Dorsolateral prefrontal cortex (tissue), 120 donors: ENCODE measurements at regions of chr1 and their contacts with region 1.

Region 1: DNA sequence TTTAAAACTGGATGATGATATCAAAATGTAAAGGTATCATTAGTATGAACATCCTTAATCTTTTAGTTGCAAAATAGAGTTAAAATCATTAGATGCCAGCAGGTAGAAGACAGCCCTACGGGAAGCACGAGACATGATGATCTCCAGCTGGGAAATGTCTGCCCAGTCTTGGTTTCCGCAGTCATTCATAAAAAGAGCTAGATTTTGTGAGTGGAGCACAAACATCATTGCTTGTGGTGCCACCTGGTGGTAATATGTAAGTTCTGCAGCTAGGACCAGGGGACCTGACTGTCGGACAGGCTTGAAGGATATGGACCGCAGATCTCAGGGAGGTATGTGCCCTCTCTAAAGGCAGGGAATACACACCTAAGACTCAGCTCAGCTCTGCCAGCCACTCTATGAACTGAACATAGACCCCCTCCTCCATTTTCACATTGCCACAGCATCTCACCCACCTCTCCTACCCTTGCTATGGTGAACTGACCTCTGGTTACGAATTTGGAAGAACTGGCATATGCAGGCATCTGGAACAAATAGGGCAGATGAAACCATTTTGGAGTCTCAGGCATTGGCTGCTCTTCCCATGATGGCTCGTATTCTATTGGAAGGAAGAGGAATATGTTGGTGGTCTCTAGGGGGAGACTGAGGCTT is 9.2 kb downstream of the FCMR start:
- DNase-seq: peak; percentile 40 to 83 (median 70)
- H3K4me3 ChIP-seq: no peak overlapping the region
- H3K27ac ChIP-seq: no peak overlapping the region
- H3K27me3 ChIP-seq: peaks cover 0 to 40% (median 22%) of the 10 kb centered on the region in 45 donors
- CTCF ChIP-seq: peak; percentile 70 to 98 (median 93)

Region 2: GRCh38 chr1:206725109-206725963 is 187.2 kb before region 1 on chr1:
- intact Hi-C with region 1: loop called in 1 of 2 experiments (anchors 2 kb)
- DNase-seq: peak in 4 of 10 donors; percentile 26 to 52 (median 36)
- H3K4me3 ChIP-seq: no peak overlapping the region
- H3K27ac ChIP-seq: no peak overlapping the region
- H3K27me3 ChIP-seq: no peaks in the 10 kb centered on the region
- CTCF ChIP-seq: peak in 53 of 56 donors; percentile 11 to 68 (median 51)

Region 3: DNA sequence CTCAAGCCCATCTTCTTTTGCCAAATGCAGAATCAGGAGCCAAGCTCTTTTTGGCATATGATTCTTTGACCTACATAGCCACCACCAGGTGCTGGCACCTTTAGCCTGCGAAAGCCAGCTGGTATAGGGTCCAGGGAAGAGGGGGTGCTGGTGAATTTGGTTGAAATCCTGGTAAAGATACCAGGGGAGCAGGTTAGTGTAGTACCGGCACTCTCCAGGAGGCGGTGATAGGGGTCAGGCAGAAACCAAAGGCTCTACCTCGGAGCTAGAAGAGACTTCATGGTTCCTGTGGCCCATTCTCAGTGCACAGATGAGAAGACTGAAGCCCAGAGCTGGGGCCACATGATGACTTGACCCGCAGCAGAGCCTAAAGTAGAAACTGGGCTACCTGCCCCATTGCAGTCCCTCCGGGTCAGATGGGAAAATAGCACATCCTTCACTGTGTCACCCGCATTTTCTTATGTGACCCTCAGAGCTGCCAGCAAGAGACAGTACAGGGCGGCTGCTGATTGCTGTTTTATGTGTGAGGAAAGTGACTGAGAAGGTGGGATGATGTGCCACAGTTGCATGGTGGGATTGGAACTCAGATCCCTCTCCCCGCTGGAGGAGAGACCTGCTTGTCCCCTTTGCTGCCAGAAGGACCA is 177.9 kb before region 1 on chr1:
- intact Hi-C with region 1: loop called in 1 of 2 experiments (anchors 5 kb)
- DNase-seq: peak in 5 of 10 donors; percentile 16 to 59 (median 41)
- H3K4me3 ChIP-seq: no peak overlapping the region
- H3K27ac ChIP-seq: no peak overlapping the region
- H3K27me3 ChIP-seq: no peaks in the 10 kb centered on the region
- CTCF ChIP-seq: peak in 54 of 56 donors; percentile 40 to 74 (median 59)

Region 4: DNA sequence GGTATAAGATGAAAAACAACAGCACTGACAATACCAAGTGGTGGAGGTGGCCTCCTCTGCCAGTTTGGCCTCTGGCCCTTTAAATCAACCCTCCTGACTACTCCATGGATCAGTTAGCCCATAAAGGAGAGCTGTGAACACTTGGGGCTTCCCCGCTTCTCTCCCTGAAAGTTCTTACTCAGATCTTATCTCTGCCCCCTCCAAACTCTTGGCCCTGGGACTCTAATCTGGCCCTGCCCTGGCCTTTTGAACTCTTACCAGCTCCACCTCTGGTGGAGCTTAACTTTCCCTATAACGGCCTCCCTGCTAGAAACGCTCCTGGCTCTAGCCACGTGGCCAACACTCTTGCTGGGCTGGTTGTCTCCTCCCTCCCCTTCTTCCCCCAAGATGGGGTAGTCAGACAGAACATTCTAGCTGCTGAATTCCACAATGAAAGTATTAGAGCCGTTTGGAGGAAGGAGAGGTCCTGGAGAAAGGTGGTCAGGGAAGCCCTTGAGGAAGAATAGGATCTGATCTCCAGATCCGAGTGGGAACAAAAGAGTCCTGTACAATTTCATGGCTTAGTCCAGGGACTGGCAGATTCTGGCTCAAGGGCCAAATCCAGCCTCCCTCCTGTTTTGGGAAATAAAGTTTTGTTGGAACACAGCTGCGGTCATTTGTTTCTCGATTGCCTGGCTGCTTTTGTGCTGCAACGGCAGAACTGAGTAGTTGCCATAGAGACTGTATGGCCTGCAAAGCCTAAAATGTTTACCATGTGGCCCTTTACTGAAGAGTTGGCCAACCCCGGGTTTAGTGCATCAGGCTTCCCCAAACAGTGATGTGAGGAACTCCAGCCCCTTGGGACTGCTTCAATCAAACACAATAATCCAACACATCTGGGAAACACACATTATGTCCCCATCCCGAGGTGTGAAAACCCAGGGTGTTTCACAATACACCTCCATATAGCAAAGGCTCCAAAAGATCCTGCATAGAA is 43.2 kb after region 1 on chr1:
- intact Hi-C with region 1: no loop called
- DNase-seq: no peak
- H3K4me3 ChIP-seq: no peak overlapping the region
- H3K27ac ChIP-seq: no peak overlapping the region
- H3K27me3 ChIP-seq: peaks cover 0 to 3% (median 0%) of the 10 kb centered on the region in 45 donors
- CTCF ChIP-seq: no peak

Region 5: GRCh38 chr1:206979379-206980043 is 66.9 kb after region 1 on chr1:
- intact Hi-C with region 1: no loop called
- DNase-seq: no peak
- H3K4me3 ChIP-seq: no peak overlapping the region
- H3K27ac ChIP-seq: no peak overlapping the region
- H3K27me3 ChIP-seq: peaks cover 0 to 4% (median 0%) of the 10 kb centered on the region in 45 donors
- CTCF ChIP-seq: peak in 46 of 56 donors; percentile 19 to 58 (median 37)